Left ventricle myocardium superior (tissue), 1 donor: ENCODE measurements at regions of chr12 and their contacts with region 1.

Region 1: DNA sequence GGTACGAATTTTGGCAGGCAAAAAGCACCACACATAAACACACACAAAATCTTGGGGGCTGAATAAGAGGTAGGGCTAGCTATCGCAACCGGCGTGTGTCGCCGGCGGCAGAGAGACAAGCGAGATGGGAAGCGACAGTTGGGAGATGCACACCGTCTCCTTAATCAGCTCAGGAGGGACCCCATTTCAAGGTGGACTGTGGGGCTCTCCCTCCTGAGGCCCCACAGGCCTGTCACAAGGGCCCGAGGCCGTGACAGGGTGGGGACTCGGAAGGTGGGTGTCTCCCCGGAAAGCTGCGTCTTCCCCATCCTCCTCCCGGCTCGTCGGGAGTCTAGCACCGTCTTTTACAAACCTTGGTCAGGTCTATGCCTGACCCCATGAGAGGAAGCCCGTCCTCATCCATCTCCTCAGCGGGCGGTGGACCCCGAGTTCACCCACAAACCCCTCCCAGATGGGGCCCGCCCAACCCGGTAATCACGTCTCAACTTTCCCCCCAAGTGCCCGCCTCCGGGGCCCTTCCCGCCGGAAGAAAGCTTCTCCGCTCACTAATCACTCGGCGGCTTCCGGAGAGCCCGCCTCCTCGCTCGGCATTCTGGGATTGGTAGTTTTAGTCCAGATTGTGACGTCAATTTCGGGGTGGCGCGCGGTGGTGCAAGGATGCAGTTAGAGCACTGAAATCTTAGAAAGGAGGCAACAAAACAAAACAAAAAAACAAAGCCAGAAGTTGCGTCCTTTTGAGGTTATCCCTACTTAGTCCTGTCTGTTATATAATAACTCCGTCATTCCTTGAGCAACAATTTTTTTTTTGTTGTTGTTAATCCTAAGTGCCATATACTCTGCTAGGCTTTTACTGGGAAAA is at the start of gene WASHC3:
- DNase-seq: peak; percentile 96
- ATAC-seq: peak; percentile 100
- total RNA-seq, gene WASHC3: 31.2 TPM

Region 2: GRCh38 chr12:102119674-102120563 is 58.1 kb after region 1 on chr12 and contains the starts of genes NUP37 and PARPBP:
- intact Hi-C with region 1: loop called (anchors 10 kb)
- DNase-seq: peak; percentile 94
- ATAC-seq: peak; percentile 100
- total RNA-seq, gene NUP37: 15.3 TPM
- total RNA-seq, gene PARPBP: 0.47 TPM